ENCODE measurements at regions of chr15 and their contacts with region 1.

Region 1: GRCh38 chr15:43872416-43873020 is 45.7 kb downstream of the WDR76 start:
- DNase-seq: peak; percentile 45
- ATAC-seq: peak; percentile 93
- H3K4me3 ChIP-seq: no peak overlapping the region
- H3K27ac ChIP-seq: no peak overlapping the region
- H3K4me1 ChIP-seq: no peaks in the 10 kb centered on the region
- H3K27me3 ChIP-seq: no peaks in the 10 kb centered on the region
- CTCF ChIP-seq: peak; percentile 33 to 70 (median 70); a peak in 5 of 6 replicates
- POLR2A ChIP-seq: no peak
- RAD21 ChIP-seq: peak; percentile 67

Region 2: GRCh38 chr15:43930079-43930478 is 57.6 kb after region 1 on chr15:
- CTCF ChIA-PET with region 1: no interaction called
- POLR2A ChIA-PET with region 1: no interaction called
- RAD21 ChIA-PET with region 1: no interaction called
- intact Hi-C with region 1: no loop called
- DNase-seq: no peak
- ATAC-seq: peak; percentile 75
- H3K4me3 ChIP-seq: no peak overlapping the region
- H3K27ac ChIP-seq: no peak overlapping the region
- H3K4me1 ChIP-seq: peaks cover 8 to 36% of the 10 kb centered on the region in 2 experiments
- H3K27me3 ChIP-seq: no peaks in the 10 kb centered on the region
- CTCF ChIP-seq: no peak
- POLR2A ChIP-seq: no peak
- RAD21 ChIP-seq: no peak

Region 3: DNA sequence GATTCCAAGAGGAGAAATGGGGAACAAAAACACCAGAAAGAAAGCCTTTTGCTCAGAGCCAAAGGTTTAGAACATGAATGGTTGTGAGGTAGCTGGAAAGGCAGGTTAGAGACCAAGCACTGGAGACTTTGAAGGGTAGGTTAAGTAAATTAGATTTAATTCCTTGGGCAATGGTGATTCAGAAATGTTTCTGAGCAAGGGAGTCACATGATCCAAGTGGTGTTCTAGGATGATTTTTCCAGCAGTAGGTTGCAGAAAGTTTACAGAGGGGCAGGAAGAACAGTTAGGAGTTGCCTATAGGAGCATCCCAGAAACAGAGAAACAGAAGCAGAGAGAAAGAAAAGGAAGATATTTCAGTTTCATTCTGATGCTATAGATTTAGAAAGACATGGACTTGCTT is 94.1 kb after region 1 on chr15:
- CTCF ChIA-PET with region 1: no interaction called
- POLR2A ChIA-PET with region 1: no interaction called
- RAD21 ChIA-PET with region 1: no interaction called
- intact Hi-C with region 1: no loop called
- DNase-seq: no peak
- ATAC-seq: no peak
- H3K4me3 ChIP-seq: no peak overlapping the region
- H3K27ac ChIP-seq: no peak overlapping the region
- H3K4me1 ChIP-seq: no peaks in the 10 kb centered on the region
- H3K27me3 ChIP-seq: no peaks in the 10 kb centered on the region
- CTCF ChIP-seq: no peak
- POLR2A ChIP-seq: no peak
- RAD21 ChIP-seq: no peak

Region 4: DNA sequence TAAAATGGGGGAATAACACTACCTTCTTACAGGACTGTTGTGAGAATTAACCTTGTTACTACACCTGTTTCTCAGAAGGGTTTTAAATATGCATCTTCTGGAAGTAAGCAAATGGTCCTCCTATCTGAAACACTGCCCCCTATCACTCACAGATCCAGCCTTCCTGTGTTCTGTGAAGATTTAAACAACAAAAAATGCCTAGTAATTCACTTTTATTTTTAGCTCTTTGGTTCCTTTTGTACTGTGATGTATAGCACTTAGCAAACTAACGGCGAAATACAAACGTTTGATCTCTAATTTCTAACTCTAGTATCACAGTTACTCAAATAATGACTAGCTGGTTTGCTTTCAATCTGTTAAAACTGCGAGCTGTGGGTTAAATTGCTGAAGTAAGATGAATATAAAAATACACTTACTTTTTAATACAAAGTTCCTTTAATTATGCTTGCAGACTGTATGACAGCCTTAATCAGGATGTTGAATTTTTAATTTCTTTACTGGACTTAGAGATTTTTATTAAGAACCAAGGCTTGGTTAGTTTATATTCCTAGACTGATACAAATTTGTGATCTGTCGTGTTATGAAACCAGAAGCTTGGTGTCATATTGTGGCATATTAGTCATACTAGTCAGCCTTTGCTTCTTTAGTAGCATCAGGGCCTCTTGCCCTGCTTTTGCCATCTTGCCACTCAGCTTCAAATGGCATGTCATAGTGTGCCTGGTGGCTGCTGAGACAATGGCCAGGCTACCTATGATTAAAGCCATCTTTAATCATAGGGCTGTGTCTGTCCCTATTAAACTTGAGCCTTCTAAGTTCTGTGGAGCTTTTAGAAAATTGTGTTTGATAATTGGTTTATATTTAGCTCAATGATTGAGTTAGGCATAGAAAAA is 673.6 kb after region 1 on chr15:
- CTCF ChIA-PET with region 1: no interaction called
- POLR2A ChIA-PET with region 1: no interaction called
- RAD21 ChIA-PET with region 1: no interaction called
- intact Hi-C with region 1: loop called (anchors 10 kb)
- DNase-seq: no peak
- ATAC-seq: peak; percentile 66
- H3K4me3 ChIP-seq: no peak overlapping the region
- H3K27ac ChIP-seq: no peak overlapping the region
- H3K4me1 ChIP-seq: peaks cover 2 to 6% of the 10 kb centered on the region in 2 experiments; a peak in 3 of 4 replicates
- H3K27me3 ChIP-seq: no peaks in the 10 kb centered on the region
- CTCF ChIP-seq: peak in 2 of 3 experiments; percentile 46 to 59; a peak in 4 of 6 replicates
- POLR2A ChIP-seq: no peak
- RAD21 ChIP-seq: peak; percentile 23

Measured in HCT116 (cell line).